Panc1 (cell line): ENCODE measurements at regions of chr2 and their contacts with region 1.

Region 1: DNA sequence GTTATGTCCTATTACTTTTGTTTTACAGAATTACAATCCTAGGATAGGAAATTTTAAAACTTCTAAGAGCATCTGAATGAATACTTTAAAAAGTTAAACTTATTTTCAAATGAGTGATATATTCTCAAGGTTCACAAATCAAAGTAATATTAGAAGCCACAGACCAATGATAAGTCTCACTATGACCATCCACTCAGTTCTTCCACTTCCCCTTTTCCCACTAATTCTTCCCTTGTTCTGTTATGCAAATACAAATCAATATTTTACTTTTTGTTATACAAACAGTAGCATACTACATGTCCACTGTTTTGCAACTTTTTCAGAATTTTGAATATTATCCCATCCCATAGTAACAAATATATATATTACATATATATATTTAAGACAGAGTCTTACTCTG is 20.2 kb downstream of the USP37 start:
- DNase-seq: no peak
- ATAC-seq: no peak
- H3K4me3 ChIP-seq: no peak overlapping the region
- H3K27ac ChIP-seq: no peak overlapping the region
- H3K4me1 ChIP-seq: no peaks in the 10 kb centered on the region
- H3K27me3 ChIP-seq: no peaks in the 10 kb centered on the region
- CTCF ChIP-seq: no peak

Region 2: GRCh38 chr2:218516614-218517013 is 31.4 kb before region 1 on chr2:
- CTCF ChIA-PET with region 1: no interaction called
- POLR2A ChIA-PET with region 1: interaction called, 12 read pairs
- in situ Hi-C with region 1: no loop called
- intact Hi-C with region 1: no loop called
- DNase-seq: no peak
- ATAC-seq: no peak
- H3K4me3 ChIP-seq: no peak overlapping the region
- H3K27ac ChIP-seq: no peak overlapping the region
- H3K4me1 ChIP-seq: no peaks in the 10 kb centered on the region
- H3K27me3 ChIP-seq: no peaks in the 10 kb centered on the region
- CTCF ChIP-seq: peak; percentile 49; the same call in 1 of the 2 replicates